ENCODE measurements at regions of chr5 and their contacts with region 1.

Region 1: DNA sequence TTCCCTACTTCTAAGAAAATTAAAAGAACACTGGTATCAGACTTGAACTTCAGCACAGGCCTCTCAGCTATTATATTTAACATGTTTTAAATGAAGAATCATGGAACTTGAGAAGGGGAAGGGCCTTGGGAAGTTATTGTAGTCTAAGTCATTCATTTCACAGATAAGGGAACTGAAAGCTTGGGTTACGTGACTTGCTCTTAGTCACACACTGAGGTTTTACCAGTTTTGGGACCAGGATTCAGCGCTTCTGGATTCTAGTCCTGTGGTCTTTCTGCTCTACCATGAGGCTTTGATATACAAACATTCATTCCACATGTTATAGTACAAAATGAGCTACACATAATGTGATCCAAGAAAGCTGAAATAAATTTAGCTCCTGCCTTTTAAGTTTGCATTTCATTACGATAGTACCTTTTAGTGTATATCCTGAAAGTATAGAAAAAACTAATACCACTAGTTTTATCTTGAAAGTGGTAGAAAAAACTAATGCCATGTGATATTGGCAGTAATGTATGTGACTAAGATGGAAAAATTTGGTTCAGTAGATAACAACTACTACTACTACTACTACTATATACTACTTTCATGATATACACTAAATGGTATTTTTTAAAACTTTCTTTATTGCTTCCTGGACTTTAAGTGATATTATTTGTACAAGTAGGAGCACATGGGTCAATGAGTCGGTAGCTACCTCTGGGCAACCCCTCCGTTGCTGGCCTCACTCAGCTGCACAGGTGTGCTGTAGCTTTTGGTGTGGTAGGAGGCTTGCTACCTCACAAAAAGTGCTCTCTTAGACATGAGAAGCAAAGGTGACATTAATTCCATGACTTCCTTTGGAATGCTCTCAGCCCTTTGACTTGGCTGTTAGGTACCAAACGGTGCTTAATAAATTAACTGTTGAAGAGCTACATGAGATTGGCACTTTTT is 40.7 kb downstream of the F2RL2 start:
- DNase-seq: peak; percentile 79
- ATAC-seq: peak; percentile 98
- H3K4me3 ChIP-seq: no peak overlapping the region
- H3K27ac ChIP-seq: peak overlapping the region; percentile 66
- H3K4me1 ChIP-seq: peaks cover 14% of the 10 kb centered on the region; the same call in 1 of the 2 replicates
- H3K27me3 ChIP-seq: no peaks in the 10 kb centered on the region
- CTCF ChIP-seq: no peak
- EP300 ChIP-seq: peak; percentile 81 to 98; a peak in 3 of 4 replicates
- POLR2A ChIP-seq: no peak
- RAD21 ChIP-seq: no peak

Region 2: DNA sequence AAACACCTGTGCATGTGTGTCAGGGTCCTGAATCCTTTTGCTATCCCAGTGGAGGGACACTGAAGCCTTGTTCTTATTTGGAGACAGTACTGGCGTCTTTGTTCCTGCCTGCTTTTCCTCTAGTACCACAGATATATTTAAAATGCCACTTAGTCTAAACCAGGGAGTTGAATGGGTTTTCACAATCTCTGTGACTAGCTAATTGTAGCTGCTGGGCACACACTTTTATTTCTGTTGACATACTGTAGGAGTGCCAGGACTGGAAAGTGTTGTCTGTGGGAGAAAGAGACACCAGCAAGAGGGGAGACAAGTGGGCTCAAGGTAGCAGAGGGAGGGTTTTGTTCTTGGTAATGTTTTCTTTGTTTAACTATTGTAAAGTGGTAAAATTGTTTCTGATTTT is 673.3 kb before region 1 on chr5:
- CTCF ChIA-PET with region 1: no interaction called
- POLR2A ChIA-PET with region 1: no interaction called
- RAD21 ChIA-PET with region 1: no interaction called
- SMC1A ChIA-PET with region 1: no interaction called
- in situ Hi-C with region 1: no loop called
- intact Hi-C with region 1: no loop called
- DNase-seq: no peak
- ATAC-seq: no peak
- H3K4me3 ChIP-seq: no peak overlapping the region
- H3K27ac ChIP-seq: no peak overlapping the region
- H3K4me1 ChIP-seq: no peaks in the 10 kb centered on the region
- H3K27me3 ChIP-seq: no peaks in the 10 kb centered on the region
- CTCF ChIP-seq: no peak
- EP300 ChIP-seq: no peak
- POLR2A ChIP-seq: no peak
- RAD21 ChIP-seq: no peak

Region 3: DNA sequence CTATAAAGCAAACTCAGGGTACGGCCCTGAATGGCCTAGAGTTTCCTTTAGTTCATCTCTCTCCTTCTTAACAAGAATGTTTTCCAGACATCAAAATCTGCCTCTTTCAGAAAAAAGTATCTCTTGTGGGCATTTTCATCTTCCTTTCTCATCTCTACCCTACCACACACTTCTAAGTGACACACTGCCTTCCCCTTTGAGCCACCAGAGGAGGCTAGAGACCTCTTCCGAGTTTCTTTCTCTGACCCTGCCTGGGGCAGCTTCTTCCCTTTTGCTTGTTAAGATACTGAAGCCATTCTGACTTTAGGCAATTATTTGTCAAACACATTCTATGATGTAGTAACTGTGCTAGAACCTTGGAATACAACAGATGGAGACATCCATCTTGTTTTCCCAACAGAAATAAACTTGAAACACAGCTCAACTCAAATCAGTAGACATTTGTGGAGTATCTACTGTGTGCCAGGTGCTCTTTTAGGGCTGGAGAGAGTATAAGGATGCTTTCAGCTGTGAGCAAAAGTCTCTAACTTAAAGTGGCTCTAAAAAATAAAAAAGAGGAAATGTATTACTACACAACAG is 507.9 kb before region 1 on chr5:
- CTCF ChIA-PET with region 1: interaction called, 7 read pairs
- POLR2A ChIA-PET with region 1: no interaction called
- RAD21 ChIA-PET with region 1: interaction called, 4 read pairs
- SMC1A ChIA-PET with region 1: interaction called, 8 read pairs
- in situ Hi-C with region 1: no loop called
- intact Hi-C with region 1: loop called (anchors 10 kb)
- DNase-seq: no peak
- ATAC-seq: peak; percentile 86
- H3K4me3 ChIP-seq: no peak overlapping the region
- H3K27ac ChIP-seq: no peak overlapping the region
- H3K4me1 ChIP-seq: no peaks in the 10 kb centered on the region
- H3K27me3 ChIP-seq: peaks cover 0 to 4% of the 10 kb centered on the region in 2 experiments; a peak in 1 of 4 replicates
- CTCF ChIP-seq: peak; percentile 69 to 88 (median 77)
- EP300 ChIP-seq: no peak
- POLR2A ChIP-seq: no peak
- RAD21 ChIP-seq: peak; percentile 96

Region 4: GRCh38 chr5:76292620-76293322 is 289.7 kb before region 1 on chr5:
- CTCF ChIA-PET with region 1: interaction called, 13 read pairs
- POLR2A ChIA-PET with region 1: no interaction called
- RAD21 ChIA-PET with region 1: no interaction called
- SMC1A ChIA-PET with region 1: interaction called, 10 read pairs
- in situ Hi-C with region 1: no loop called
- intact Hi-C with region 1: no loop called
- DNase-seq: no peak
- ATAC-seq: peak; percentile 94
- H3K4me3 ChIP-seq: no peak overlapping the region
- H3K27ac ChIP-seq: no peak overlapping the region
- H3K4me1 ChIP-seq: peaks cover 10% of the 10 kb centered on the region; the same call in 1 of the 2 replicates
- H3K27me3 ChIP-seq: no peaks in the 10 kb centered on the region
- CTCF ChIP-seq: no peak
- EP300 ChIP-seq: peak; percentile 54 to 71; a peak in 3 of 4 replicates
- POLR2A ChIP-seq: no peak
- RAD21 ChIP-seq: no peak

Region 5: GRCh38 chr5:76351577-76351976 is 230.9 kb before region 1 on chr5:
- CTCF ChIA-PET with region 1: interaction called, 20 read pairs
- POLR2A ChIA-PET with region 1: no interaction called
- RAD21 ChIA-PET with region 1: interaction called, 10 read pairs
- SMC1A ChIA-PET with region 1: interaction called, 14 read pairs
- in situ Hi-C with region 1: no loop called
- intact Hi-C with region 1: no loop called
- DNase-seq: peak; percentile 87
- ATAC-seq: peak; percentile 100
- H3K4me3 ChIP-seq: no peak overlapping the region; the same call in 1 of the 2 replicates
- H3K27ac ChIP-seq: peak overlapping the region; percentile 15; the same call in 1 of the 2 replicates
- H3K4me1 ChIP-seq: peaks cover 10% of the 10 kb centered on the region
- H3K27me3 ChIP-seq: no peaks in the 10 kb centered on the region
- CTCF ChIP-seq: no peak
- EP300 ChIP-seq: peak; percentile 38 to 61; a peak in 2 of 4 replicates
- POLR2A ChIP-seq: no peak
- RAD21 ChIP-seq: no peak

Region 6: GRCh38 chr5:76439201-76439600 is 143.3 kb before region 1 on chr5:
- CTCF ChIA-PET with region 1: no interaction called
- POLR2A ChIA-PET with region 1: no interaction called
- RAD21 ChIA-PET with region 1: no interaction called
- SMC1A ChIA-PET with region 1: no interaction called
- in situ Hi-C with region 1: no loop called
- intact Hi-C with region 1: no loop called
- DNase-seq: no peak
- ATAC-seq: no peak
- H3K4me3 ChIP-seq: no peak overlapping the region
- H3K27ac ChIP-seq: no peak overlapping the region
- H3K4me1 ChIP-seq: no peaks in the 10 kb centered on the region
- H3K27me3 ChIP-seq: no peaks in the 10 kb centered on the region
- CTCF ChIP-seq: no peak
- EP300 ChIP-seq: no peak
- POLR2A ChIP-seq: no peak
- RAD21 ChIP-seq: no peak

Region 7: GRCh38 chr5:76513486-76513885 is 69.0 kb before region 1 on chr5:
- CTCF ChIA-PET with region 1: no interaction called
- POLR2A ChIA-PET with region 1: no interaction called
- RAD21 ChIA-PET with region 1: no interaction called
- SMC1A ChIA-PET with region 1: no interaction called
- in situ Hi-C with region 1: no loop called
- intact Hi-C with region 1: no loop called
- DNase-seq: no peak
- ATAC-seq: no peak
- H3K4me3 ChIP-seq: no peak overlapping the region
- H3K27ac ChIP-seq: no peak overlapping the region
- H3K4me1 ChIP-seq: no peaks in the 10 kb centered on the region
- H3K27me3 ChIP-seq: no peaks in the 10 kb centered on the region
- CTCF ChIP-seq: no peak
- EP300 ChIP-seq: no peak
- POLR2A ChIP-seq: no peak
- RAD21 ChIP-seq: no peak

Region 8: GRCh38 chr5:76544268-76544926 is 38.1 kb before region 1 on chr5:
- CTCF ChIA-PET with region 1: interaction called, 65 read pairs
- POLR2A ChIA-PET with region 1: interaction called, 25 read pairs
- RAD21 ChIA-PET with region 1: interaction called, 72 read pairs
- SMC1A ChIA-PET with region 1: interaction called, 56 read pairs
- in situ Hi-C with region 1: no loop called
- intact Hi-C with region 1: no loop called
- DNase-seq: peak; percentile 25
- ATAC-seq: peak; percentile 55
- H3K4me3 ChIP-seq: no peak overlapping the region
- H3K27ac ChIP-seq: peak overlapping the region; percentile 35; the same call in 1 of the 2 replicates
- H3K4me1 ChIP-seq: peaks cover 37% of the 10 kb centered on the region
- H3K27me3 ChIP-seq: no peaks in the 10 kb centered on the region
- CTCF ChIP-seq: peak; percentile 64 to 81 (median 68); a peak in 5 of 6 replicates
- EP300 ChIP-seq: no peak
- POLR2A ChIP-seq: no peak
- RAD21 ChIP-seq: peak; percentile 77

Region 9: DNA sequence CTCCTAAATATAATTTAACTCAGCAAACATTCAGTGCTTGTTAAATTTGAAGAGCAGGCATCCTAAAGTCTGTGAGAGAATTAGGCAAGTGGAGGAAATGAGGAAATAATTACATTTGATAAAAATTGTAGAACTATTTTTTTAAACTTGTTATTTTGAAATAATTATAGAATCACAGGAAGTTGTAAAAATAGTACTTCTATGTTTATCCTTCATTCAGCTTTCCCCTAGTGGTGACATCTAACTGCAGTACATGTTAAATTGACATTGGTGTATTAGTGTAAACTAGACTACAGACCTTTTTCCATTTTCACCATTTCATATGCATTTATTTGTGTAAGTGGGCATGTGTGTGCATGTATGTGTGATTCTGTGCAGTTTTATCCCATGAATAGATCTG is 10.9 kb before region 1 on chr5:
- CTCF ChIA-PET with region 1: interaction called, 40 read pairs
- POLR2A ChIA-PET with region 1: no interaction called
- RAD21 ChIA-PET with region 1: interaction called, 12 read pairs
- SMC1A ChIA-PET with region 1: interaction called, 28 read pairs
- in situ Hi-C with region 1: no loop called
- intact Hi-C with region 1: no loop called
- DNase-seq: no peak
- ATAC-seq: peak; percentile 36; the same call in 1 of the 3 replicates
- H3K4me3 ChIP-seq: no peak overlapping the region
- H3K27ac ChIP-seq: no peak overlapping the region
- H3K4me1 ChIP-seq: no peaks in the 10 kb centered on the region
- H3K27me3 ChIP-seq: no peaks in the 10 kb centered on the region
- CTCF ChIP-seq: 0 out of 6 replicates have a peak, but pooled peaks of 1 of the 3 experiments have one; percentile 6
- EP300 ChIP-seq: no peak
- POLR2A ChIP-seq: no peak
- RAD21 ChIP-seq: no peak

Measured in GM12878 (cell line).